Ascending aorta (tissue), 2 donors: ENCODE measurements at regions of chr13 and their contacts with region 1.

Region 1: GRCh38 chr13:75740031-75740430 is 103.9 kb downstream of the LMO7 start:
- DNase-seq: no peak
- H3K4me3 ChIP-seq: no peak overlapping the region
- H3K27ac ChIP-seq: peak overlapping the region in 1 of 2 donors; percentile 33
- H3K4me1 ChIP-seq: peaks cover 6 to 18% of the 10 kb centered on the region in 2 donors
- H3K27me3 ChIP-seq: no peaks in the 10 kb centered on the region
- CTCF ChIP-seq: no peak

Region 2: GRCh38 chr13:75704579-75705320 is 35.3 kb before region 1 on chr13:
- intact Hi-C with region 1: loop called (anchors 5 kb)
- DNase-seq: no peak
- H3K4me3 ChIP-seq: peak overlapping the region in 1 of 2 donors; percentile 16
- H3K27ac ChIP-seq: peak overlapping the region; percentile 21 to 63
- H3K4me1 ChIP-seq: peaks cover 0 to 8% of the 10 kb centered on the region in 2 donors
- H3K27me3 ChIP-seq: no peaks in the 10 kb centered on the region
- CTCF ChIP-seq: no peak